ENCODE measurements at regions of chr10 and their contacts with region 1.

Region 1: GRCh38 chr10:14604181-14605142 is 170.2 kb downstream of the FAM107B start:
- DNase-seq: peak; percentile 79 to 89
- H3K4me3 ChIP-seq: peak overlapping the region; percentile 49
- H3K4me3 Mint-ChIP-seq: peak overlapping the region; percentile 80
- H3K27ac Mint-ChIP-seq: peak overlapping the region; percentile 43
- H3K4me1 ChIP-seq: peaks cover 51% of the 10 kb centered on the region
- H3K4me1 Mint-ChIP-seq: peaks cover 40% of the 10 kb centered on the region
- H3K27me3 ChIP-seq: no peaks in the 10 kb centered on the region
- H3K27me3 Mint-ChIP-seq: no peaks in the 10 kb centered on the region
- CTCF ChIP-seq: no peak

Region 2: DNA sequence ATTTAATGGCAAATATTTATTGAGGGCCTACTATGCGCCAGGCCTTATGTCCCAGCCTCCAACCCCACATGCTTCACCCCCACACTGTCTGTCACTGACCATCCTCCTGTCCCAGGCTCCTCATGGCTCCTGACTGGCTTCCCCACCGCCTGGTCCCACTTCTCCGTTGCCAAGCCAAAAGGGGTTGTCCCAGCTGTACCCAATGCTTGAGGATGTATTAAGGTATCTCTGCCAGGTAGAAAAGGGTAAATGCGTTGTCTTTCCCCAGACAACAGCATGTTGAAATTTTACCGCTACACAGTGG is 104.9 kb before region 1 on chr10:
- CTCF ChIA-PET with region 1: no interaction called
- POLR2A ChIA-PET with region 1: no interaction called
- intact Hi-C with region 1: loop called (anchors 5 kb)
- DNase-seq: no peak
- H3K4me3 ChIP-seq: no peak overlapping the region
- H3K4me3 Mint-ChIP-seq: no peak overlapping the region
- H3K27ac Mint-ChIP-seq: no peak overlapping the region
- H3K4me1 ChIP-seq: no peaks in the 10 kb centered on the region; the same call in 1 of the 2 replicates
- H3K4me1 Mint-ChIP-seq: peaks cover 15% of the 10 kb centered on the region
- H3K27me3 ChIP-seq: no peaks in the 10 kb centered on the region
- H3K27me3 Mint-ChIP-seq: no peaks in the 10 kb centered on the region
- CTCF ChIP-seq: no peak

Region 3: GRCh38 chr10:14536241-14537213 is 67.9 kb before region 1 on chr10:
- CTCF ChIA-PET with region 1: no interaction called
- POLR2A ChIA-PET with region 1: no interaction called
- intact Hi-C with region 1: loop called (anchors 2 kb)
- DNase-seq: peak; percentile 84 to 87
- H3K4me3 ChIP-seq: no peak overlapping the region
- H3K4me3 Mint-ChIP-seq: no peak overlapping the region
- H3K27ac Mint-ChIP-seq: no peak overlapping the region
- H3K4me1 ChIP-seq: peaks cover 55% of the 10 kb centered on the region
- H3K4me1 Mint-ChIP-seq: peaks cover 38% of the 10 kb centered on the region
- H3K27me3 ChIP-seq: no peaks in the 10 kb centered on the region
- H3K27me3 Mint-ChIP-seq: no peaks in the 10 kb centered on the region
- CTCF ChIP-seq: peak; percentile 70 to 73

Region 4: GRCh38 chr10:14653271-14654228 is 49.1 kb after region 1 on chr10:
- CTCF ChIA-PET with region 1: no interaction called
- POLR2A ChIA-PET with region 1: interaction called, 3 read pairs
- intact Hi-C with region 1: loop called (anchors 5 kb)
- DNase-seq: peak; percentile 78 to 88
- H3K4me3 ChIP-seq: no peak overlapping the region
- H3K4me3 Mint-ChIP-seq: peak overlapping the region; percentile 68
- H3K27ac Mint-ChIP-seq: peak overlapping the region; percentile 99
- H3K4me1 ChIP-seq: peaks cover 40% of the 10 kb centered on the region
- H3K4me1 Mint-ChIP-seq: peaks cover 32% of the 10 kb centered on the region
- H3K27me3 ChIP-seq: no peaks in the 10 kb centered on the region
- H3K27me3 Mint-ChIP-seq: no peaks in the 10 kb centered on the region
- CTCF ChIP-seq: no peak

Region 5: DNA sequence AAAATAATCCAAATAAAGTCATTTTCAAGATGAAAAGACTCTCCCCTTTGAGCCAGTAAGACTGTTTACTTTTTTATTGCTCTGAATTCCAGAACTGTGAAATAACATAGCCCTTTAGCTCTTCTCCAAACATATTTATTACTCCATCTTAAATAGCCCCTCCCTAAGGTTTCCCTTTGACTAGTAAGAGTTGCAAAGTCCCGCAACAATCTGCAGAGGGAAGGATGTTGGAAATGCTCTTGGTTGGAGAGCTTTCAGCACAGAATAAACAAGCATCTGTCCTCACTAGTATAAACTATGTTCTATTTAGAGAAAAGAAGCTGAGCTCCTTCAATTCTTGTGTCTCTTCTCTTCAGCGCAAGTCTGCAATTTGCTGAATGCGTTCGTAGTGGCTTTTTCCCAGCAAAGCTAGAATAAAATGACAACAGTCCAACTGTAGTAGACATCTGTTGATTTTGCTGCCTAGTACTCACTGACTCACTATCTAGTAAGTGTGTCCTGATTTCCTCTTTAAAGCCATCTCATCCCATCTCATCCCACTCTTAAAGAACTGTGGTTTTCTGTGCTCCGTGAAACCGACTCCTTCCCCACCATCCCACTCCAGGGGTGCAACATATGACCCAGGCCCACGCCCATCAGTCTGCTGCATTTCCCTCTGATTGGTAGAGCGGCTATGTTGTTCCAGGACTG is 66.2 kb after region 1 on chr10:
- CTCF ChIA-PET with region 1: no interaction called
- POLR2A ChIA-PET with region 1: no interaction called
- intact Hi-C with region 1: loop called (anchors 2 kb)
- DNase-seq: peak in 1 of 2 experiments; percentile 60
- H3K4me3 ChIP-seq: no peak overlapping the region
- H3K4me3 Mint-ChIP-seq: peak overlapping the region; percentile 61
- H3K27ac Mint-ChIP-seq: peak overlapping the region; percentile 71
- H3K4me1 ChIP-seq: peaks cover 54% of the 10 kb centered on the region
- H3K4me1 Mint-ChIP-seq: peaks cover 43% of the 10 kb centered on the region
- H3K27me3 ChIP-seq: no peaks in the 10 kb centered on the region
- H3K27me3 Mint-ChIP-seq: no peaks in the 10 kb centered on the region
- CTCF ChIP-seq: no peak

Region 6: DNA sequence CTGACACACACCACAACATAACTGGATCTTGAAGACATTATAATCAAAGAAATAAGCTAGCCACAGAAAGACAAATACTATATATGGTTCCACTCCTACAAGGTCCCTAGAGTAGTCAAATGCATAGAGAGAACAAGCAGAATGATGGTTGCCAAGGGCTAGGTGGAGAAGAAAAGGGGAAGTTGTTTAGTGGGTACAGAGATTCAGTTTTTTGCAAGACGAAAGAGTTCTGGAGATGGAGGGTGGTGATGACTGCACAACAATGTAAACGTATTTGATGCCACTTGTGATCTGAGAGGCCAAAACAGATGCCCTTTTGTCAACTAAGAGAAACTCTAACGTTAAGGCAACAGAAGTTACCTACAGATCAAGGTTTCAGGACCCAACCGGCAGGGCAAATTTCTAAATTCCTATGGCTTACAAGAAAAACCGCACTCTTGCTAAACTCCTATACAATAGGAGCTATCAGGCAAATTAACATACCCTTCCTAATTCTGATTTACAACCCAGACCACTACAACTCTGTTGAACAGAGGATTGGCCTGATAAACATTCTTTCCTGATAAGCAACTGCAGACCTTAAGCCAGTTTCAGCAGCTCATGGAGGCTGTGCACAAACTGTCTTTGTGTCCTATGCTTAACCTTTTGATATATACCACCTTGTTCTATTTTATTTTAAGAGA is 101.2 kb after region 1 on chr10:
- CTCF ChIA-PET with region 1: no interaction called
- POLR2A ChIA-PET with region 1: no interaction called
- intact Hi-C with region 1: loop called (anchors 2 kb)
- DNase-seq: peak in 1 of 2 experiments; percentile 68
- H3K4me3 ChIP-seq: no peak overlapping the region
- H3K4me3 Mint-ChIP-seq: no peak overlapping the region
- H3K27ac Mint-ChIP-seq: peak overlapping the region; percentile 3
- H3K4me1 ChIP-seq: peaks cover 53% of the 10 kb centered on the region
- H3K4me1 Mint-ChIP-seq: peaks cover 37% of the 10 kb centered on the region
- H3K27me3 ChIP-seq: no peaks in the 10 kb centered on the region
- H3K27me3 Mint-ChIP-seq: no peaks in the 10 kb centered on the region
- CTCF ChIP-seq: no peak

Region 7: GRCh38 chr10:14837757-14838581 is 233.5 kb after region 1 on chr10 and contains the starts of genes CDNF, HSPA14 and MSANTD7:
- CTCF ChIA-PET with region 1: no interaction called
- POLR2A ChIA-PET with region 1: interaction called, 3 read pairs
- intact Hi-C with region 1: loop called (anchors 5 kb)
- DNase-seq: peak; percentile 100
- H3K4me3 ChIP-seq: peak within 1 kb of the TSS; percentile 91
- H3K4me3 Mint-ChIP-seq: peak within 1 kb of the TSS; percentile 70
- H3K27ac Mint-ChIP-seq: peak within 1 kb of the TSS; percentile 91
- H3K4me1 ChIP-seq: no peaks in the 10 kb centered on the region; the same call in 1 of the 2 replicates
- H3K4me1 Mint-ChIP-seq: peaks cover 15% of the 10 kb centered on the region
- H3K27me3 ChIP-seq: no peaks in the 10 kb centered on the region
- H3K27me3 Mint-ChIP-seq: no peaks in the 10 kb centered on the region
- CTCF ChIP-seq: no peak
- total RNA-seq, gene CDNF: 3.4 and 3.9 TPM in 2 replicates
- total RNA-seq, gene HSPA14: 36.9 and 39.3 TPM in 2 replicates
- total RNA-seq, gene MSANTD7: 30.0 and 32.8 TPM in 2 replicates

Measured in Caco-2 (cell line).